Activated B cell treated with CpG ODN at 0.5 μM for 24 hours (primary cell): ENCODE measurements at regions of chrX and their contacts with region 1.

Region 1: DNA sequence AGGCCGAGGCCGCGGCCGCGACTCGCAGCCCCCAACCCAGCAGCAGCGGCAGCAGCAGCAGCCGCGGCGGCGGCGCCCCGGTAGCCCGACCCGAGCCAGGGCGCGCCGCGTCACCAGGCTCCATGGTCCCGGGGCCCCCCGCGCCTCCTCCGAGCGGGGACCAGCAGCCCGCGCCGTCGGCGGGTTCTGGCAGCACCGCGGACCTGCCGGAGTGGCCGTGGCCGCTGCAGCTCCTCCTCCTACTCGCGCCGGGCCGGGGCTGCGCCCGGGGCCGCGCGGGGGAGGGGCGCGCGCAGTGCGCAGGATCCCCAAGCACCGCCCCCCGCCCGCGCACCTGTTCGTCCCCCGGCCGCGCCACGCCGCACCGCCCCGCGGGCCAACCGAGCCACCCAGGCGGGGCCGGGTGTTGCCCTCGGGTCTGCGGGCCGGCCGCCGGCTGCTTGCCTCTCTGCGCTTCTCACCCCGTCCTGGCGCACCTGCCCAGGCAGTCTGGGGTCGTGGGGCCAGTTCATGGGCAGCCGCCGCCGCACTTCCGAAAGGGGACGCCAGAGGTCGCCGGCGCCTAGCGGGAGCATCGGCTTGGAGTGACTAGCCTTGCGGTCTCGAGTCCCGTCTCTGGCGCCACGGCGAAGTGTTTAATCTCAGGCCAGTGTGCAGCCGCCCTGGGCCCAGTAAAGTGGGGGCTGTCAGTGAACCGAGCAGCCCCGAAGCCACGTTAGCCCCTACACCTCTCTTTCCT is at the start of gene SLC9A7:
- DNase-seq: peak; percentile 81
- ATAC-seq: peak; percentile 68
- H3K4me3 Mint-ChIP-seq: peak within 1 kb of the TSS; percentile 96
- H3K27ac Mint-ChIP-seq: peak within 1 kb of the TSS; percentile 93
- H3K4me1 Mint-ChIP-seq: peaks cover 44% of the 10 kb centered on the region
- H3K27me3 Mint-ChIP-seq: no peaks in the 10 kb centered on the region
- CTCF ChIP-seq: no peak
- total RNA-seq, gene SLC9A7: 44.5 and 55.1 TPM in 2 replicates

Region 2: GRCh38 chrX:46642145-46642544 is 116.9 kb before region 1 on chrX:
- CTCF ChIA-PET with region 1: no interaction called
- POLR2A ChIA-PET with region 1: no interaction called
- intact Hi-C with region 1: loop called (anchors 5 kb)
- DNase-seq: no peak
- ATAC-seq: peak; percentile 42
- H3K4me3 Mint-ChIP-seq: no peak overlapping the region
- H3K27ac Mint-ChIP-seq: peak overlapping the region; percentile 56
- H3K4me1 Mint-ChIP-seq: peaks cover 54% of the 10 kb centered on the region
- H3K27me3 Mint-ChIP-seq: no peaks in the 10 kb centered on the region
- CTCF ChIP-seq: no peak

Region 3: DNA sequence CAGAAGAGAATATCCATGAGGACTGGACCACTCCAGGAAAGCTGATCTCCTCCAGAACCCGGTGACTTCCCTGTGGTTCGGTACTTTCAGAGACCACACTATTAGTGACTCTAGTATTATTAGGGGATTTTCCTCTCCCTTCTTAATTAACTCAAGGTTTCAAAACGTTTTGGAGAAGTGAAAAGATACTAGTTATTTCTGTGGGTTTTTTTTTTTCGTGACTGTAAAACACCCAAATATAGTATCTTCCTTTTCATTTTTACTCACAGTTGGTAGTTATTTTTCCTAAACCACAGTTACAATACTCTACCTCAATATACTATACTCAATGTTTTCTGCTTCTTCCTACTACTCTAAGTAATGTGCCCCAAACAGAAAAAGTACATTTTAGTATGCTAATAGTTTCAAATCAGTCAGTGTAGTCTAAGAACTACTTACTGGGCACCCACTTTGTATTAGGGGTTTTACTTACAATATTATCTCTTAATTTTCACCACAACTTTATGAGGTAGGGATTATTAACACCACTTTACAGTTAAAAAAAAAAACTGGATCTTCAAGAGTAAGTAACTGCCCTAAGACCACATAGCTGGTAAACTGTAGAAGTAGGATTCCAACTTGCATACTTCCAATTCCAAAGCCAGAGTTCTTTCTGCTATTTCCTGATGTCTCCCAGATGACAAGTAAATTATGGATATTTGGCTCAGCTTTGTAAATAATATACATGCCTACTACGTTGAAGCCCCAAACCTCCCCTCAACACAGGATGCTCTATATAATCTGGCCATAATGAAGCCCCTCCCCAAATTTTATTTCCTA is 45.2 kb before region 1 on chrX:
- CTCF ChIA-PET with region 1: no interaction called
- POLR2A ChIA-PET with region 1: no interaction called
- intact Hi-C with region 1: loop called (anchors 1 kb)
- DNase-seq: no peak
- ATAC-seq: peak; percentile 60
- H3K4me3 Mint-ChIP-seq: peak overlapping the region; percentile 58
- H3K27ac Mint-ChIP-seq: peak overlapping the region; percentile 86
- H3K4me1 Mint-ChIP-seq: peaks cover 89% of the 10 kb centered on the region
- H3K27me3 Mint-ChIP-seq: no peaks in the 10 kb centered on the region
- CTCF ChIP-seq: no peak

Region 4: GRCh38 chrX:46903458-46904242 is 144.6 kb after region 1 on chrX:
- CTCF ChIA-PET with region 1: no interaction called
- POLR2A ChIA-PET with region 1: no interaction called
- intact Hi-C with region 1: loop called (anchors 2 kb)
- DNase-seq: peak; percentile 54
- ATAC-seq: peak; percentile 99
- H3K4me3 Mint-ChIP-seq: peak overlapping the region; percentile 73
- H3K27ac Mint-ChIP-seq: peak overlapping the region; percentile 35
- H3K4me1 Mint-ChIP-seq: peaks cover 5% of the 10 kb centered on the region
- H3K27me3 Mint-ChIP-seq: no peaks in the 10 kb centered on the region
- CTCF ChIP-seq: no peak

Region 5: GRCh38 chrX:47093248-47093647 is 334.2 kb after region 1 on chrX:
- CTCF ChIA-PET with region 1: interaction called, 3 read pairs
- POLR2A ChIA-PET with region 1: no interaction called
- intact Hi-C with region 1: loop called (anchors 2 kb)
- DNase-seq: no peak
- ATAC-seq: no peak
- H3K4me3 Mint-ChIP-seq: no peak overlapping the region
- H3K27ac Mint-ChIP-seq: no peak overlapping the region
- H3K4me1 Mint-ChIP-seq: no peaks in the 10 kb centered on the region
- H3K27me3 Mint-ChIP-seq: no peaks in the 10 kb centered on the region
- CTCF ChIP-seq: no peak